ENCODE measurements at regions of chr5 and their contacts with region 1.

Region 1: GRCh38 chr5:111520908-111521307 is 8.6 kb upstream of the STARD4 start:
- DNase-seq: no peak
- H3K4me3 ChIP-seq: no peak overlapping the region
- H3K27ac ChIP-seq: no peak overlapping the region
- H3K4me1 ChIP-seq: no peaks in the 10 kb centered on the region
- H3K27me3 ChIP-seq: peaks cover 7% of the 10 kb centered on the region
- CTCF ChIP-seq: no peak

Region 2: GRCh38 chr5:111472579-111472978 is 48.3 kb before region 1 on chr5:
- CTCF ChIA-PET with region 1: no interaction called
- POLR2A ChIA-PET with region 1: no interaction called
- intact Hi-C with region 1: no loop called
- DNase-seq: no peak
- H3K4me3 ChIP-seq: no peak overlapping the region
- H3K27ac ChIP-seq: no peak overlapping the region
- H3K4me1 ChIP-seq: no peaks in the 10 kb centered on the region
- H3K27me3 ChIP-seq: no peaks in the 10 kb centered on the region
- CTCF ChIP-seq: no peak

Region 3: DNA sequence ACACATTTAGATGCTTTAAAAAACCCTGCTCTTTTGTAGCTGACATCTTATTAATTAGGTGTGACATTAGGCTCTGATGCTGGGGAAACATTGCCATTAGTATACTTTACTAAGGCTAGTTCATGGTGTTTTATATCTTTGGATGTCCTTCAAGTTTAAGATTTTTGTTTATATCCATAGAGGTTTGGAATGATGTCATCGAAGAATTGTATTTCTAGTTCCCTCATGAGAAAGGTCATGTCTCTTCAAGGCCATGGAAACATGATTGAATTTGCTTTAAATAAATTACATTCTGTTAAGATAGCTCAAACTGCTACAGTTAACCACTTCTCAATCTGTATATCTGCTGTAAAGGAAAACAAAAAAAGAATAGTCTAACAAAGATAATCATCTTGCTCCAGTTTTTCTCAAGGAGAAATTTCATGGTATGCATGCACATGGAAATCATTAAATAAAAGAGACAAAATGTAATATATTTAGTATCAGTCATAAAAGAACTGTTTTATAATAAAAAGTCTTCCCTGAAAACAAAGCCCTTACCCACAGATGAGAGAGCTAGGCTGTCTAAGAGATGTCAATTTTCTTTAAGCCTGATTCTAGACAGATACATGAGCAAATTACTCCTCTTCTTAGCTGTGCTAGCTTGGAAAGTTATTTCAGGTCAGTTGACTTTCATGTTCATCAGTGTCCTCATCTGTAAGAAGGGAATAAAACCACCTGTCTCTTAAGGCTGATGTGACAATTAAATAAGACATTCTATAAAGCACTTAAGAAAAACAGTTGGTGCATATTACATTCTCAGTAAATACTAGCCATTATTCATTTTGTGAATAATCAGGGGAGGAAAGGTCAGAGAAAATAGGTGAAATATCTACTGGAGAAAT is 16.5 kb after region 1 on chr5:
- CTCF ChIA-PET with region 1: no interaction called
- POLR2A ChIA-PET with region 1: no interaction called
- intact Hi-C with region 1: loop called (anchors 1 kb)
- DNase-seq: no peak
- H3K4me3 ChIP-seq: no peak overlapping the region
- H3K27ac ChIP-seq: no peak overlapping the region
- H3K4me1 ChIP-seq: no peaks in the 10 kb centered on the region
- H3K27me3 ChIP-seq: no peaks in the 10 kb centered on the region
- CTCF ChIP-seq: no peak

Region 4: GRCh38 chr5:111800356-111800755 is 279.4 kb after region 1 on chr5:
- CTCF ChIA-PET with region 1: no interaction called
- POLR2A ChIA-PET with region 1: no interaction called
- intact Hi-C with region 1: no loop called
- DNase-seq: no peak
- H3K4me3 ChIP-seq: no peak overlapping the region
- H3K27ac ChIP-seq: no peak overlapping the region
- H3K4me1 ChIP-seq: no peaks in the 10 kb centered on the region
- H3K27me3 ChIP-seq: no peaks in the 10 kb centered on the region
- CTCF ChIP-seq: no peak